ENCODE measurements at regions of chr11 and their contacts with region 1.

Region 1: DNA sequence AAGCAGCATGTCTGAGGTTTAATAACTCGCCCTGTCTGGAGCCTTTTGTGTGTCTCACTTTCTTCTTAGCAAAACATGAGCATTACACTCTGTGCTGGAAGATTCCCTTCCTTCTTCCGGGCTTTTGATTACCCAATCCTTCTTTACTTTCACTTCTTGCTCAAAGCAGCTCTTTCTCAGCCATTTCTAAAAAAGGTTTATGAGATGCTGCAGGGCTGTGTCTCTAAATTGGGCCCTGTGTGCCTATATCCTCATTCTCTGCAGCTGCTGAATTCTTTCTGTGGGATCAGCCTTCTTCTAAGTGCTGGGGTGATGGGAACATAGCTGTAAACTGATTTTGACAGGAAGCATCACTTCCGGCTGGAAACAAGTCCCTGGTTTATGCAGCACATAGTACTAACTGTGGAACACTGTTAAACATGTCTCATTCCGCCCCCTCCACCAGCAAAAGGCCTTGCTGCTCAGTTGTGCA is 71.8 kb downstream of the PIWIL4 start:
- DNase-seq: no peak
- H3K4me3 ChIP-seq: peak overlapping the region in 1 of 2 donors; percentile 29
- H3K27ac ChIP-seq: peak overlapping the region; percentile 22
- H3K4me1 ChIP-seq: peaks cover 9% of the 10 kb centered on the region
- H3K27me3 ChIP-seq: no peaks in the 10 kb centered on the region
- CTCF ChIP-seq: no peak
- POLR2A ChIP-seq: no peak

Region 2: GRCh38 chr11:93197380-93198214 is 1441.3 kb before region 1 on chr11 and contains the start of gene SLC36A4:
- intact Hi-C with region 1: loop called (anchors 5 kb)
- DNase-seq: peak in 1 of 2 donors; percentile 96
- H3K4me3 ChIP-seq: peak within 1 kb of the TSS; percentile 77 to 96
- H3K27ac ChIP-seq: peak within 1 kb of the TSS; percentile 97
- H3K4me1 ChIP-seq: peaks cover 8% of the 10 kb centered on the region
- H3K27me3 ChIP-seq: no peaks in the 10 kb centered on the region
- CTCF ChIP-seq: no peak
- POLR2A ChIP-seq: peak in 1 of 2 donors; percentile 73
- total RNA-seq, gene SLC36A4: 16.7 TPM

Region 3: GRCh38 chr11:94593030-94593429 is 45.9 kb before region 1 on chr11:
- intact Hi-C with region 1: no loop called
- DNase-seq: no peak
- H3K4me3 ChIP-seq: no peak overlapping the region
- H3K27ac ChIP-seq: no peak overlapping the region
- H3K4me1 ChIP-seq: no peaks in the 10 kb centered on the region
- H3K27me3 ChIP-seq: no peaks in the 10 kb centered on the region
- CTCF ChIP-seq: no peak
- POLR2A ChIP-seq: no peak

Region 4: DNA sequence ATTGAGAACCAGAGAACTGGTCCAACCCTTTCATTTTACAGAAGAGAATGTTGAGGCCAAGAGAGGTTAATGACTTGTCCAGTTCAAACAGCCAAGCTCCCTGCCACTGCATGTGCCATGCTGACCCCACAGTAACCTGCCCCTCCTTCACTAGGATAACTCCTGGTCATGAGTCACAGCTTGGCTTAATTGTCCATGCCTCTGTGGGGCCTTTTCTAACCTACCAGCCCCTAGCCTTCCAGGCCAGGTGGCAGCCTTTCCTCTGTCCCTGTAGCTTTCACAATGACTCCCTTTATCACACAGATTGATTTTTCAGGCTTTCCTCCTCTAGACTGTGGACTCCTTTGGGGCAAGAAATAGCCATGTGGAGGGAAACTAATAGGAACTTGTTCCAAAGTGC is 25.4 kb after region 1 on chr11:
- intact Hi-C with region 1: no loop called
- DNase-seq: peak in 1 of 2 donors; percentile 44
- H3K4me3 ChIP-seq: no peak overlapping the region
- H3K27ac ChIP-seq: no peak overlapping the region
- H3K4me1 ChIP-seq: no peaks in the 10 kb centered on the region
- H3K27me3 ChIP-seq: no peaks in the 10 kb centered on the region
- CTCF ChIP-seq: no peak
- POLR2A ChIP-seq: no peak

Region 5: DNA sequence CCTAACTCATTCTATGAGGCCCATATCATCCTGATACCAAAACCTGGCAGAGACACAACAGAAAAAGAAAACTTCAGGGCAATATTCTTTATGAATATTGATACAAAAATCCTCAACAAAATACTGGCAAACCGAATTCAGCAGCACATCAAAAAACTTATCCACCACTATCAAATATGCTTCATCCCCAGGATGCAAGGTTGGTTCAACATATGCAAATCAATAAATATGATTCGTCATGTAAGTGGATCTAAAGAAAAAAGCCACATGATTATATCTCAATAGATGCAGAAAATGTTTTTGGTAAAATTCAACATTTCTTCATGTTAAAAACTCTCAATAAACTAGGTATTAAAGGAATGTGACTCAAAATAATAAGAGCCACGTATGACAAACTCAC is 1791.7 kb after region 1 on chr11:
- intact Hi-C with region 1: loop called (anchors 5 kb)
- DNase-seq: no peak
- H3K4me3 ChIP-seq: no peak overlapping the region
- H3K27ac ChIP-seq: no peak overlapping the region
- H3K4me1 ChIP-seq: no peaks in the 10 kb centered on the region
- H3K27me3 ChIP-seq: no peaks in the 10 kb centered on the region
- CTCF ChIP-seq: no peak
- POLR2A ChIP-seq: no peak